Naive thymus-derived CD8-positive, alpha-beta T cell (primary cell): ENCODE measurements at regions of chr22 and their contacts with region 1.

Region 1: DNA sequence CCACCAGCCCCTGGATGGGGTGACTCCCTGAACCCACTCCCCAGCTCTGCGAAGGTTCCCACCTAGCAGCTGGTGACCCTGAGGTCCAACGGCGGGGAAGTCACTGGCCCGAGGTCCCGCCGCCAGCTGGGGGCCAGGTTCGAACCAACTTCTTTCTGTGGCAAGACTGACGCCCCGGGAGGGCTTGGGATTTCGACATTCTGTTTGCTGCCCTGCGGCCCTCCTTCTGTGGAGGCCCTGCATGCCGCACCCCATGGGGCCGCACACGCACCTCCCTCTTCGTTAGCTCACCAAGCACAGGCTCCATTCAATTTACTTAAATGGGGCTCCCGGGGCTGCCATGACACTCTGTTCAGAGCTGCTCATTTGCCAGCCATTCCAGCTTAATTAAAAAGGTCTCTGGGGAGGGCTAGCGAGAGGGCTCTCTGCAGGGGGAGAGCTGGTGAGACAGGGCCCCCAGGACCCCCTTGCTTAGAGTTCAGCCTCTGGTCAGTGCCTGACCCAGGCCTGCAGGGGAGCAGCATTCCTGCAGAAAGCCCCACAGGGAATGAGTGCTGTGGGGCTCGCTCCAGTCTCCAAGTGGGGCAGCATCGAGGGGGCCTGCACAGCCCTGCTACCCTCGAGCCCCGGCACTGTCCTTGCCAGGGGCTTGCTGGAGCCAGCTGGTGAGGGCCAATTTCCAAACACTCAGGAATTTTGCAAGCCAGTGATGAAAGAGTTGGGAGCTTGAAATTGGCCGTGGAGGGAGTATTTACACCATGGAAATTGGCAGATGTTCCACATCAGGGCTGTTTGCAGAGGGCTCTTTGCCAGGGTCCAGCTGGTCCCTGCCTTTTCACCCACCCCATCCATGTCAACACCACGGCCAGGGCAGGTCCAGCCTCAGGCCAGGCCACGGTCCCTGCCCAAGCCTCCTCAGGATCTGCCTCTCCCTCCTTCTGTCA is 80.8 kb downstream of the CACNA1I start:
- DNase-seq: no peak
- ATAC-seq: no peak
- H3K4me3 Mint-ChIP-seq: no peak overlapping the region
- H3K27ac Mint-ChIP-seq: peak overlapping the region in 1 of 10 donors; percentile 6
- H3K4me1 Mint-ChIP-seq: peaks cover 0 to 10% (median 5%) of the 10 kb centered on the region in 4 donors
- H3K27me3 Mint-ChIP-seq: peaks cover 0 to 5% (median 0%) of the 10 kb centered on the region in 5 donors

Region 2: GRCh38 chr22:39765661-39766060 is 114.3 kb after region 1 on chr22:
- POLR2A ChIA-PET with region 1: interaction called, 10 read pairs
- DNase-seq: no peak
- ATAC-seq: no peak
- H3K4me3 Mint-ChIP-seq: no peak overlapping the region
- H3K27ac Mint-ChIP-seq: no peak overlapping the region
- H3K4me1 Mint-ChIP-seq: peaks cover 0 to 4% (median 1%) of the 10 kb centered on the region in 4 donors
- H3K27me3 Mint-ChIP-seq: peaks cover 0 to 10% (median 8%) of the 10 kb centered on the region in 5 donors